ENCODE measurements at regions of chr13 and their contacts with region 1.

Region 1: GRCh38 chr13:46721054-46721453 is 75.9 kb downstream of the ESD start:
- DNase-seq: peak in 1 of 2 donors; percentile 49
- H3K4me3 ChIP-seq: no peak overlapping the region
- CTCF ChIP-seq: peak in 1 of 3 donors; percentile 63
- POLR2A ChIP-seq: no peak

Region 2: GRCh38 chr13:46492946-46493345 is 228.1 kb before region 1 on chr13:
- intact Hi-C with region 1: loop called (anchors 10 kb)
- DNase-seq: no peak
- H3K4me3 ChIP-seq: no peak overlapping the region
- CTCF ChIP-seq: no peak
- POLR2A ChIP-seq: no peak